ENCODE measurements at regions of chr18 and their contacts with region 1.

Region 1: DNA sequence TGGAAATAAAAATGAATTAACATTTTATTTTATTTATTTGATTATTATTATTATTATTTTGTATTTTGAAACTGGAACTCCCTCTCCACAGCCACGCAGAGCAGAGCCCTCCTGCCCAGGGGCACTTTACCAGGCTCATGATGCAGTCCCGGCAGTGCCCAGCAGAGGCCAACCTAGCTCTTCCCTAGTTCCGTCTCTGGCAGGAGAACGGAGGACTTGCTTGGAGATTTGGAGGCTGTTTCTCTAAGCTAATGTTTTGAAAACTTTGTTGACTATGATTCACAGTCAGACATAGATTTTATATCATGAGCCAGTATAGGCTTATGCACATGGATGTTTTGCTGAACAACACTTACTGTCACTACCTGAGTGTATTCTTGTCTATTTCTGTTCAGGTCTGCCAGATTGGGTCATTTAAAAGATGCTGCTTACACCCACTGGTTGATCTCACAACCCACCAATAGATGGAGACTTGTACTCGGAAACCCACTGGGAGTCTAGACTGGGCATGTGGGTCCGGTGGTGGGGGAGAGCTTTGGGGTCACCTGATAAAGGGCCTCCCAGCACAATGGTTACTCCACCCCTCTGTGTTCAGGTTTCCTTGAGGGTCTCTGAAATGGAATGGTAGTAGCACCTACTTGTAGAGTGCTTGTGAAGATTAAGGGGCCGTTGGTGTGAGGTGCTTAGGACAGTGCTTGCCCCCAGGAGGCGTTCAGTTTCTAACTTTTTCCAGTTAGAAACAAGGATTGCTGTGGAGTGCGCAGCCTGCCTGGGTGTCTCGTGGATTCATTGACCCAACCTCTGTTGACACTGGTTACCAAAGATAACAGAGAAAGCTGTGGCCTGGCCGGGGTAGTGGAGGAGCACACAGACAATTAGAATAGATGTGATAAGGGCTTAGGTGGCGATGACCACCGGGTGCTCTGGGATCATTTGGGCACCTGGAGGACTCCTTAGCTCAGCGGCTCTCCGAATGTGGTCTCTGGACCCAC is 177.3 kb downstream of the HAUS1 start:
- DNase-seq: peak; percentile 80
- ATAC-seq: peak; percentile 87
- H3K4me3 Mint-ChIP-seq: no peak overlapping the region
- H3K27ac Mint-ChIP-seq: no peak overlapping the region
- H3K4me1 Mint-ChIP-seq: peaks cover 11% of the 10 kb centered on the region
- H3K27me3 Mint-ChIP-seq: no peaks in the 10 kb centered on the region

Region 2: GRCh38 chr18:45139478-45139877 is 1142.0 kb before region 1 on chr18:
- CTCF ChIA-PET with region 1: no interaction called
- POLR2A ChIA-PET with region 1: no interaction called
- intact Hi-C with region 1: no loop called
- DNase-seq: no peak
- ATAC-seq: no peak
- H3K4me3 Mint-ChIP-seq: no peak overlapping the region
- H3K27ac Mint-ChIP-seq: no peak overlapping the region
- H3K4me1 Mint-ChIP-seq: no peaks in the 10 kb centered on the region
- H3K27me3 Mint-ChIP-seq: no peaks in the 10 kb centered on the region

Region 3: GRCh38 chr18:46042571-46043123 is 238.8 kb before region 1 on chr18:
- CTCF ChIA-PET with region 1: no interaction called
- POLR2A ChIA-PET with region 1: no interaction called
- intact Hi-C with region 1: no loop called
- DNase-seq: peak; percentile 26
- ATAC-seq: peak; percentile 47
- H3K4me3 Mint-ChIP-seq: no peak overlapping the region
- H3K27ac Mint-ChIP-seq: peak overlapping the region; percentile 76
- H3K4me1 Mint-ChIP-seq: peaks cover 35% of the 10 kb centered on the region
- H3K27me3 Mint-ChIP-seq: no peaks in the 10 kb centered on the region

Region 4: DNA sequence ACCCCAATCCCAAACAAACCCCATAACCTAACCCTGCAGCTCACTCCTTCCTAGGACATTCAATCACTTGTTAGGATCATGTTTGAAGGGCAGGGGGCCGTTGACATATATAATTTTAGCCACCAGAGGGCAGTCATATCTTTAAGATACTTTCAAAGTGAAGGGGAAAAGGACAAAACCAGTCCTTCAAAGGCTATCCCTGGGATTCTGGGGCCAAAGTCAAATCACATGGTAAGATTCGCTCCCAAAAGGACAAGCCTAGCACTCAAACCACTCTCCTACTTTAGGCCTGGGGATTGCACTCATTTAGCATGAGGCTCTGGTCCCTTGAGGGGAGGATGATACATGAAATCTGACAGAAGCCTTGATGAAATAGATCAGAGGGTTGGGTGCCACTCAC is 132.7 kb before region 1 on chr18:
- CTCF ChIA-PET with region 1: no interaction called
- POLR2A ChIA-PET with region 1: no interaction called
- intact Hi-C with region 1: loop called in 1 of 2 experiments (anchors 1 kb)
- DNase-seq: peak; percentile 59
- ATAC-seq: peak; percentile 77
- H3K4me3 Mint-ChIP-seq: no peak overlapping the region
- H3K27ac Mint-ChIP-seq: no peak overlapping the region
- H3K4me1 Mint-ChIP-seq: peaks cover 23% of the 10 kb centered on the region
- H3K27me3 Mint-ChIP-seq: no peaks in the 10 kb centered on the region

Region 5: DNA sequence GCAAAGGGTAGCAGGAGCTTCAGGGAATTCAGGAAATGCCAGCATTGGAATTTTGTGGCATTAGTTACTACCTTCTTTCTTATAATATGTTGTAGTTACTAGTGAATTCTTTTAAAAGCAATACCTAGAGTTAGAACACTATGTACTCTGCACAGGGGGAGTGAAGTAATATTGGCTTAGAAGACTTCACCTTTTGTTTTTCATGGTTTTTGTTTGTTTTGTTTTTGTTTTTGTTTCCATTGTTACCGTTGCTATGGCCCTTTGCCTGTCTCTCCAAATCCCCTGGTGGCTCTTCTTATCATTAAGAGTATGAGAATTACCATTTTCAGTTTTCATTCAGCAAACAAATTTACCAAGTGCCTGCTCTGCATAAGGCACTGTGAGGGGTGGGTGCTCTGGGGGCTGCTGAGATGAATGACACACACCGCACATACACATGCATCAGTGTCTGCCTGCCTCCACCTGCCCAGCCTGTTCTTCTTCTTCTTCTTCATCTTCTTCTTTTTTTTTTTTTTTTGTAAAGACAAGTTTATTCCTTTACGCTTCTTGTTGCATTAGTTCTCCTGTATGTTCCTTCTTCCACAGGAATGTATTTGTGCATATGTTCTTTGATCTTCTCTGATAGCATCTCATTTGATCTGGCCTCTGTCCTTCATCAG is 17.1 kb before region 1 on chr18:
- CTCF ChIA-PET with region 1: interaction called, 15 read pairs
- POLR2A ChIA-PET with region 1: no interaction called
- intact Hi-C with region 1: no loop called
- DNase-seq: no peak
- ATAC-seq: peak; percentile 30
- H3K4me3 Mint-ChIP-seq: no peak overlapping the region
- H3K27ac Mint-ChIP-seq: no peak overlapping the region
- H3K4me1 Mint-ChIP-seq: peaks cover 57% of the 10 kb centered on the region
- H3K27me3 Mint-ChIP-seq: no peaks in the 10 kb centered on the region

Region 6: DNA sequence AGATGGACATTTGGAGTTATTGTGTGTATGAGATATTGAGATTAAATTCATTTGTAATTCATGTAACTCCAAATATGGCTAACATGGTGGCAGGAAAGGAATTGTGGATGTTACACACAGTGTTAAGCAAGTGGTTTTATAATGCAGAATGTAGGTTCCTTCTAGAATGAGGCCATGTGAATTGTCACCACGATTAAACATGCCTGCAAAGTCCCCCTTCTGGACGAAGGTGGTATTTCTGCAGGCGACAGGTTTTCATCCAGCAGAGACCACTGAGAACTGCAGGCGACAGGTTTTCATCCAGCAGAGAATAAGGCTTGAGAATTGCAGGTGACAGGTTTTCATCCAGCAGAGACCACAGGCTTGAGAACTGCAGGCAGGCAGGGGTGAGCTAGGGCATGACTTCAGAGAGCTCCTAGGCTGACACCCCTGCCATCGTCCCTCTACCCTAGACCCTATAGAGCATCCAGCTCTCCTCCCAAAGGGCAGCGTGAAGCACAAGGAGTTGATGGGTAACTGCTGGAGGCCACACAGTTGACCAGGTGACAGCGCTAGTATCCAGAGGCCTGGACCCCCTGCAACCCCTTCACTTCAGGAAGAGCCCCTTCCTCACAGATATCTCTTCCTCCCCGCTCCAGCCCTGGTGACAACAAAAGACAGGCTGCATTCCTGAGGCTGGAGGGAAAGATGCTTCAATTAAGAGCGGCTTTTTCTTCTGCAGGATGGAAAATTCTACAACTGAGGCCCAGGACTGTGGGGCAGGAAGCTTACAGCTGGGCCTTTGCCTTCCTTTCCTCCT is 199.8 kb after region 1 on chr18:
- CTCF ChIA-PET with region 1: interaction called, 32 read pairs
- POLR2A ChIA-PET with region 1: no interaction called
- intact Hi-C with region 1: loop called (anchors 1 kb)
- DNase-seq: peak; percentile 71
- ATAC-seq: peak; percentile 42
- H3K4me3 Mint-ChIP-seq: no peak overlapping the region
- H3K27ac Mint-ChIP-seq: no peak overlapping the region
- H3K4me1 Mint-ChIP-seq: no peaks in the 10 kb centered on the region
- H3K27me3 Mint-ChIP-seq: peaks cover 2% of the 10 kb centered on the region

Region 7: DNA sequence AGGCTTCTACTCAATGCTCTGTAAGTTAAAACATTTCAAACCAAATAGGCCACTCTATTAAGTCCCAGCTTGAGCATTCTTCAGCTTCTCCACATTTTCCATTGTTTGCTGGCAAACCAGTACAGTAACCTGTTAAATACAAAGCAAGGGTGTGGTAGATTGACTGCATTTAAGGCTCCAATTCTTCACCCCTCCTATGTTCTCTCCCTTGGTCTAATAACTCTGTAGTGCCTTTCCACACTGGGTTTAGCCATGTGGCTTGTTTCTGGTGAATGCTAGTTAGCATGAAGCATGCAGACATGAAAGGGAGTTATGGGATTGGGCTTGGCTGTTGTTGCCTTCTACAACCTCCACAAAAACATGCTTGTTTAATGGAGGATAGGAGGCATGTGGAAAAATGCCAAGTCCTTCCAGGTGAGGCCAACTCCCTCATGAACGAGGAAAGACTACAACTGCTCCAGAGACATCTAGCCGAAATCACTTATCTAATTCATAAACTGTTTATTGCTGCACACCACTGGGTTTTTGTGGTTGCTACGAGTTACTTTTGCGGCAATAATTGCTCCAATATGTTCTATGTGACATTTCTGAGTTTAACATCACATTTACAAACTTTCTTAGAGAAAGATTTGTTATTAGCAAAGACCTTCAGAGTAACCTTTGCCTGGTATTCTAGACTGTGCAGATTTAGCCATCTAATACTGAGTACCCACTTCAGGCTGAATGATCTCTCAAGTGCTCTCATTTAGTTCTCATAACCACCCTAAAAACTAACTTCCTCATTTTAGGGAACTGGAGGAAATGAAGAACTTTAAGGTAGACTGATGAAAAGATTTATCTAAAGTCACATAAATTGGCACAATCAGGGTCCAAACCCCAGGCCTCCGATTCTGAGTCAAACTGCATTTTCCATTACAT is 1544.9 kb after region 1 on chr18:
- CTCF ChIA-PET with region 1: no interaction called
- POLR2A ChIA-PET with region 1: no interaction called
- intact Hi-C with region 1: no loop called
- DNase-seq: no peak
- ATAC-seq: no peak
- H3K4me3 Mint-ChIP-seq: no peak overlapping the region
- H3K27ac Mint-ChIP-seq: no peak overlapping the region
- H3K4me1 Mint-ChIP-seq: peaks cover 2% of the 10 kb centered on the region
- H3K27me3 Mint-ChIP-seq: no peaks in the 10 kb centered on the region